CD14-positive monocyte (primary cell): ENCODE measurements at regions of chr2 and their contacts with region 1.

Region 1: GRCh38 chr2:20962939-20963557 is 80.8 kb downstream of the APOB start:
- DNase-seq: peak; percentile 32 to 51 (median 44)
- H3K4me3 ChIP-seq: no peak overlapping the region
- H3K4me3 Mint-ChIP-seq: no peak overlapping the region
- H3K27ac ChIP-seq: no peak overlapping the region
- H3K27ac Mint-ChIP-seq: no peak overlapping the region
- H3K4me1 ChIP-seq: no peaks in the 10 kb centered on the region
- H3K4me1 Mint-ChIP-seq: no peaks in the 10 kb centered on the region
- H3K27me3 ChIP-seq: no peaks in the 10 kb centered on the region
- H3K27me3 Mint-ChIP-seq: peaks cover 5 to 16% (median 13%) of the 10 kb centered on the region in 3 donors
- CTCF ChIP-seq: peak; percentile 93

Region 2: GRCh38 chr2:20661067-20661980 is 301.7 kb before region 1 on chr2:
- intact Hi-C with region 1: loop called (anchors 2 to 5 kb)
- DNase-seq: peak; percentile 63 to 79 (median 74)
- H3K4me3 ChIP-seq: no peak overlapping the region
- H3K4me3 Mint-ChIP-seq: peak overlapping the region in 1 of 2 donors; percentile 69
- H3K27ac ChIP-seq: no peak overlapping the region
- H3K27ac Mint-ChIP-seq: no peak overlapping the region
- H3K4me1 ChIP-seq: peaks cover 3 to 11% of the 10 kb centered on the region in 2 donors
- H3K4me1 Mint-ChIP-seq: peaks cover 16% of the 10 kb centered on the region
- H3K27me3 ChIP-seq: peaks cover 31 to 65% of the 10 kb centered on the region in 2 donors
- H3K27me3 Mint-ChIP-seq: peaks cover 56 to 75% (median 64%) of the 10 kb centered on the region in 3 donors
- CTCF ChIP-seq: peak; percentile 96

Region 3: GRCh38 chr2:20781656-20782265 is 181.3 kb before region 1 on chr2:
- intact Hi-C with region 1: loop called (anchors 10 kb)
- DNase-seq: peak in 2 of 3 donors; percentile 1 to 5
- H3K4me3 ChIP-seq: no peak overlapping the region
- H3K4me3 Mint-ChIP-seq: no peak overlapping the region
- H3K27ac ChIP-seq: no peak overlapping the region
- H3K27ac Mint-ChIP-seq: no peak overlapping the region
- H3K4me1 ChIP-seq: no peaks in the 10 kb centered on the region
- H3K4me1 Mint-ChIP-seq: no peaks in the 10 kb centered on the region
- H3K27me3 ChIP-seq: no peaks in the 10 kb centered on the region
- H3K27me3 Mint-ChIP-seq: no peaks in the 10 kb centered on the region
- CTCF ChIP-seq: peak; percentile 61